ENCODE measurements at regions of chr10 and their contacts with region 1.

Region 1: DNA sequence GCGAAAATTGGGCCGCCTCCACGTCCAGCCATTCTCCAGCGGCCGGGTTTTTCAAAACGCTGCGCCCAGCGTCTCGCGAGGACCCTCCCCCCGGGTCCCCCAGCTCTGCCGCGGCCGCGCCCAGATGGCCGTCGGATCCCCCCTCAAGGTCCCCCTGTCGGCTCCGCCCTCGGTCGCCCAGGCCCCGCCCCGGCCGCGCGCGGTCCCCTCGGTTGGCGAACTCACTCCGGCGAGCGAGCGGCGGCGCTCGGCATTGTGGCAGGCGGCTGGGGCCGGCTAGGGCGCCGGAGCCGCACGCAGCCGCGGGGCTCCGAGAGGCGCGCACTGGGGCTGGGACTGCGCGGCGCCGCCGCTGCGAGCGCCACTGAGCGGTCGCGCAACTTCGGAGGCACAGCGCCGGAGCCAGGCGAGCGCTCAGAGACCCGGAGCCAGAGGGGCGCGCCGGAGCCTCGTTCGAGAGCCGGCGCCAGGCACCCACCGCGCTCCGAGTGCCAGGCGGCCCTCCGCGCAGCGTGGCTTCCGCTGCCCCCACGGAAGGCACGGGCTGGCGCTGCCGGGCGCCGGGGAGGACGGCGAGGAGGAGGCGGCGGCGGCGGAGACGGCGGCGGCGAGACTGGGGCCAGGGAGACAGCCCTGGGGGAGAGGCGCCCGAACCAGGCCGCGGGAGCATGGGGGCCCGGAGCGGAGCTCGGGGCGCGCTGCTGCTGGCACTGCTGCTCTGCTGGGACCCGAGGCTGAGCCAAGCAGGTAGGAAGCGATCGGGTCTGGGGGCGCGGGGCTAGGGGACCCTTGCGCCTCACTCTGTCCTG is at the start of gene UNC5B:
- DNase-seq: peak; percentile 92
- ATAC-seq: peak; percentile 89 to 91
- total RNA-seq, gene UNC5B: 12.4 to 17.7 TPM

Region 2: GRCh38 chr10:70672165-70673042 is 540.1 kb before region 1 on chr10 and contains the start of gene ADAMTS14:
- intact Hi-C with region 1: no loop called
- DNase-seq: peak; percentile 64
- ATAC-seq: peak; percentile 48 to 67
- total RNA-seq, gene ADAMTS14: 0.53 to 0.81 TPM

Region 3: GRCh38 chr10:70903262-70903921 is 309.1 kb before region 1 on chr10:
- intact Hi-C with region 1: loop called in 1 of 2 experiments (anchors 5 kb)
- DNase-seq: peak; percentile 71
- ATAC-seq: peak; percentile 51 to 79

Region 4: GRCh38 chr10:70925377-70926225 is 286.9 kb before region 1 on chr10:
- intact Hi-C with region 1: loop called (anchors 2 to 5 kb)
- DNase-seq: peak; percentile 54
- ATAC-seq: peak; percentile 80 to 83

Region 5: DNA sequence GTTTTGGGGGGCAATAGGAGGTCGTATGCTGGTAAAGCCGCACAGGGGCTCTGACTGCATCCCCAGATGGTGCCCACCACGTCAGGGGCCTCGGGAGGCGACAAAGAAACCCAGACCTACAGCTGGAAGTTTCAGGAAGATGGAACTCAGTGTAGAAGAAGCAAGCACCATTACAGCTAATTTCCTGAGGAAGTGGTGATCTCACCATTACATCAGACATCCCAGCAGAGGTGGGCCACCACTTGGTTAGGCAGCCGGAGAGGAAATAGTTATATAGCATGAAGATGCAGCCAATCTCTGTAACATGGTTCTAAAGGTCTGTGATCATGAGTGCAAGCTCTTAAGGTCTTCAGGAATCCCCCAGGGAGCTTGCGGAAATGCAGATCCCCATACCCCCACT is 196.8 kb before region 1 on chr10:
- intact Hi-C with region 1: no loop called
- DNase-seq: no peak
- ATAC-seq: no peak

Region 6: GRCh38 chr10:71068861-71069271 is 143.7 kb before region 1 on chr10:
- intact Hi-C with region 1: loop called in 1 of 2 experiments (anchors 10 kb)
- DNase-seq: peak; percentile 66
- ATAC-seq: peak; percentile 74 to 88

Region 7: GRCh38 chr10:71080381-71081228 is 131.9 kb before region 1 on chr10:
- intact Hi-C with region 1: no loop called
- DNase-seq: no peak
- ATAC-seq: no peak

Region 8: DNA sequence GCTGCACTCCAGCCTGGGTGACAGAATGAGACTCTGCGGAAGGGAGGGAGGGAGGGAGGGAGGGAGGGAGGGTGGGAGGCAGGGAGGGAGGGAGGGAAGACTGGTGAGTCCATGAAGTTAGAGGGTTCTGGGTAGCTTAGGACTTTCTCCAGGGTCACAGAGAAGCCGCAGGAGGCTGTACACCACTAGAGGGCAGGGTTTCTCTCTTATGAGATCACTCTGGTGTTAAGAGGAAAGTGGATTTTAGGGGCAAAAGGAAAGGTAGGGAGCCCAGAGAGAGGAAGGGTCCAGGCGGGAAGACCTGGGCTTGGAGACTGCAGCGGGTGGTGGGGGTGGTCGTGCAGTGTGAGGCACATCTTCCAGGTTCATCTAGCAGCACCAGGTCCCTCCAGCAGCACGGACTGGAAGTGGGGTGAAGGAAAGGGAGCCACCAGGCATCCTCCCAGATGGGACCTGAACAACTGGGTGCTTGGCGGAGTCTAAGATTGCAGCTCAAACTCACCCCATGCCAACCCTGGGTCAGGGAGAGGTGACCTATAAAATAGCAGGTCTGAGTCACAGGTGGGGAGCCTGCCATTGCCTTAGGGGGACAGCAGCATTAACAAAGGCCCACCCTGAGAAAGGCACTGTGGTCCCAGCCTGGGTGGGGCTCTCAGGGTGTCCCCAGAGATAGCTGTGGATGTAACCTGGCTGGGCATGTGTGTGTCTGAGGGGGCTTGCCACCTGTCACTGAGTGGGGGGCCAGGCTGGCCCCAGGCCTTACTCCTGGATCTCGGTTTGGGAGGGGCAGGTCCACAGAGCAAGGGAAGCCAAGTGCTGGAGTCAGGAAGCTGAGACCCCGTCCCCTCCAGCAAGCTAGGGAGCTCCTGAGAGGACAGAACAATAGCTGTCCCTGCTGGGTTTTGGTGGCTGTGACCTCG is 58.0 kb after region 1 on chr10:
- intact Hi-C with region 1: loop called (anchors 2 to 5 kb)
- DNase-seq: peak; percentile 54
- ATAC-seq: peak; percentile 25 to 38